Vagina (tissue), 2 donors: ENCODE measurements at regions of chr7 and their contacts with region 1.

Region 1: GRCh38 chr7:2096692-2097387 is 135.9 kb downstream of the MAD1L1 start:
- DNase-seq: no peak
- H3K4me3 ChIP-seq: no peak overlapping the region
- H3K27ac ChIP-seq: no peak overlapping the region
- H3K4me1 ChIP-seq: no peaks in the 10 kb centered on the region
- H3K27me3 ChIP-seq: no peaks in the 10 kb centered on the region
- CTCF ChIP-seq: no peak
- POLR2A ChIP-seq: no peak

Region 2: DNA sequence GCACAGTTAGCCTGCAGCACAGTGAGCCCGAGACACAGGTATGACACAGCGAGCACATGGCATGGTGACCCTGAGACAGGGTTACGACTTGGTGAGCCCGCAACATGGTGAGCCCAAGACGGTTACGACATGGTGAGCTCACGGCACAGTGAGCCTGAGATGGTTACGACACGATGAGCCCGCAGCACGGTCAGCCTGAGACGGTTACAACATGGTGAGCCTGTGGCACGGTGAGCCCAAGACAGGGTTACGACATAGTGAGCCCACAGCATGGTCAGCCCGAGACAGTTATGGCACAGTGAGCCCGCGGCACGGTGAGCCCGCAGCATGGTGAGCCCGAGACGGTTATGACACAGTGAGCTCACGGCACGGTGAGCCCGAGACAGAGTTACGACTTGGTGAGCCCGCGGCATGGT is 20.2 kb before region 1 on chr7:
- intact Hi-C with region 1: loop called (anchors 1 kb)
- DNase-seq: no peak
- H3K4me3 ChIP-seq: no peak overlapping the region
- H3K27ac ChIP-seq: no peak overlapping the region
- H3K4me1 ChIP-seq: no peaks in the 10 kb centered on the region
- H3K27me3 ChIP-seq: no peaks in the 10 kb centered on the region
- CTCF ChIP-seq: no peak
- POLR2A ChIP-seq: no peak